Activated CD4-positive, alpha-beta T cell treated with anti-CD3 and anti-CD28 coated beads for 36 hours (primary cell): ENCODE measurements at regions of chr15 and their contacts with region 1.

Region 1: GRCh38 chr15:90648137-90649070 is 68.7 kb upstream of the BLM start:
- DNase-seq: peak; percentile 78
- ATAC-seq: peak; percentile 82
- H3K4me3 Mint-ChIP-seq: peak overlapping the region; percentile 39
- H3K27ac Mint-ChIP-seq: peak overlapping the region; percentile 93
- H3K4me1 Mint-ChIP-seq: peaks cover 28% of the 10 kb centered on the region
- H3K27me3 Mint-ChIP-seq: no peaks in the 10 kb centered on the region

Region 2: DNA sequence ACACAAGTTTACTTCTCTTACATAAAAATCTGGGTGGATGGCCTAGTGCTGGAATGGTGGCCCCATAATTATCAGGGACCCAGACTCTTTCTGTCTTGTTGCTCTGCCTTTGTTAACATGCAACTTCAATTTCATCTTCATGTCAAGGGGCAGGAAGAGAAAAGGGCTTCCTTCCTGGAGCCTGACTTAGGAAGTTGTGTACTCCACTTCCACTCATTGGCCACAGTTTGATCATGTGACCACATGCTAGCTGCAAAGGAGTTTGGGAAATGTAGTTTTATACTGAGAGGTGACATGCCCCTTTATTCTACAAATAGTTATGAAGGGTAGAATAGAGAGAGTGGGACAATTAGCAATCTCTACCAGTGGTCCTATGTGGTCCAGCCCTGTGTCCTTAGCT is 1191.3 kb before region 1 on chr15:
- CTCF ChIA-PET with region 1: no interaction called
- POLR2A ChIA-PET with region 1: no interaction called
- intact Hi-C with region 1: no loop called
- DNase-seq: no peak
- ATAC-seq: peak; percentile 51
- H3K4me3 Mint-ChIP-seq: no peak overlapping the region
- H3K27ac Mint-ChIP-seq: no peak overlapping the region
- H3K4me1 Mint-ChIP-seq: no peaks in the 10 kb centered on the region
- H3K27me3 Mint-ChIP-seq: peaks cover 9% of the 10 kb centered on the region

Region 3: GRCh38 chr15:90436952-90437351 is 211.5 kb before region 1 on chr15:
- CTCF ChIA-PET with region 1: no interaction called
- POLR2A ChIA-PET with region 1: no interaction called
- intact Hi-C with region 1: no loop called
- DNase-seq: no peak
- ATAC-seq: no peak
- H3K4me3 Mint-ChIP-seq: no peak overlapping the region
- H3K27ac Mint-ChIP-seq: no peak overlapping the region
- H3K4me1 Mint-ChIP-seq: peaks cover 8% of the 10 kb centered on the region
- H3K27me3 Mint-ChIP-seq: no peaks in the 10 kb centered on the region

Region 4: DNA sequence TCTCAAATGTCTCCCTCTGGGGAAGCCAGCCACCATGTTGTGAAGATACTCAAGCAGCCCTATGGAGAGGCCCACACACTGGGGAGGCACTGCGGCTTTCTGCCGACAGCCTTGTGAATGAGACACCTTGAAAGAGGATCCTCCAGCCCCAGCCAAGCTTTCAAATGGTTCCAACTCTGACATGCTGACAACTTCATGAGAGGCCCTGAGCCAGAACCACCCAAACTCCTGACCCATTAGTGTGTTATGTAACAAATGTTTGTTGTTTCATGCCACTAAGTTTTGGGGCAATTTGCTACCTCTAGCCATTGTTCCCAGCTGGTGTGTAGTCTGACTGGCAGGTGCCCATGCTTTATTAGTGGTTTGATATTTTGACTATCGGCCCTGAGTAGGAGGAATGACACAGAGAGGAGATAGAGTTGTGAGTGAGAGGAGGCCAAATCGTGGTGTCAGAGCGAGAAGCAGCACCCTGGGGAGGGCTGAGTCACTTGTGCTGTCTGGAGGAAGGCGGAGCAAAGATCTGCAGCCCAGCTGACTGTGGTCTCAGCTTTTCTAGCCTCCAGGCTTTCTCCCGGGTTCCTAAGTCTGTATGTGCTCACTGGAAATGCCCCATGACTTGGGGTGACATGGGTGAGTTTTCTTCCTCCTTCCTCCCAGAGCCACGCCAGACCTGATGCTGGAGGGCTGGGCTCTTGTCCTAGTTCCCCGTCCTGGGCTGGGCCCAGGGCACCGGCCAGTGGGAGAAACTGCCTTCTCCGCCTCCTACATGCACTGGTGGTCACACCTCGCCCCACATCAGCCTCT is 12.0 kb after region 1 on chr15:
- CTCF ChIA-PET with region 1: interaction called, 6 read pairs
- POLR2A ChIA-PET with region 1: no interaction called
- intact Hi-C with region 1: loop called in 1 of 2 experiments (anchors 1 kb)
- DNase-seq: peak; percentile 89
- ATAC-seq: peak; percentile 96
- H3K4me3 Mint-ChIP-seq: peak overlapping the region; percentile 52
- H3K27ac Mint-ChIP-seq: peak overlapping the region; percentile 43
- H3K4me1 Mint-ChIP-seq: peaks cover 73% of the 10 kb centered on the region
- H3K27me3 Mint-ChIP-seq: peaks cover 47% of the 10 kb centered on the region

Region 5: DNA sequence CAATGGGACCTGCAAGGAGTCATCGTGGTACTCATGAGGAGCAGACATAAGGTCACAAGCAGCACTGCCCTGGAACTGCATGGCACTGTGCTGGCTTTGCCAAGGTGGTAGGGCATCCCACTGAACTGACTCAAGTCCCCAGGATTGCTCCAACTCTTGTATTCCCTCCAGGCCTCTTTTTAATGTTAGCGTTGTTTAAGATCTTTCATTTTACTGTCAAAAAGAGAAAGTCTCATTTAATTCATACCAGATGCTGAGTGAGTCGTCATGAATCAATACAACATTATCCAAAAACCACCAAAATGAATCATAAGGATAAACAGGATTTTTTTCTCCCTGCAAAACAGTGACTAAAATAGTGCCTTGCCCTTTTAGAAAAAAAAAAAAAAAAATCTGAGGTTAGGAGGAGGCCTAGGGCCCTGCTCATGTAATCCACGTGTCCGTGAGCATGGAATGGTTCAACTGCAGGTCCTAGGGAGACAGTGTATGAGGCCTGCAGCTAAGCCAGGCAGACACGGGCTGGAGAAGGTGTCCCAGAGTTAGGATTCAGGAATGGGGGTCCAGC is 32.0 kb after region 1 on chr15:
- CTCF ChIA-PET with region 1: interaction called, 10 read pairs
- POLR2A ChIA-PET with region 1: no interaction called
- intact Hi-C with region 1: loop called (anchors 1 kb)
- DNase-seq: no peak
- ATAC-seq: peak; percentile 59
- H3K4me3 Mint-ChIP-seq: no peak overlapping the region
- H3K27ac Mint-ChIP-seq: no peak overlapping the region
- H3K4me1 Mint-ChIP-seq: peaks cover 46% of the 10 kb centered on the region
- H3K27me3 Mint-ChIP-seq: peaks cover 5% of the 10 kb centered on the region

Region 6: GRCh38 chr15:90691982-90692773 is 43.8 kb after region 1 on chr15:
- CTCF ChIA-PET with region 1: interaction called, 21 read pairs
- POLR2A ChIA-PET with region 1: no interaction called
- intact Hi-C with region 1: loop called (anchors 1 kb)
- DNase-seq: no peak
- ATAC-seq: no peak
- H3K4me3 Mint-ChIP-seq: no peak overlapping the region
- H3K27ac Mint-ChIP-seq: no peak overlapping the region
- H3K4me1 Mint-ChIP-seq: peaks cover 13% of the 10 kb centered on the region
- H3K27me3 Mint-ChIP-seq: no peaks in the 10 kb centered on the region

Region 7: GRCh38 chr15:90818251-90819210 is 170.1 kb after region 1 on chr15:
- CTCF ChIA-PET with region 1: no interaction called
- POLR2A ChIA-PET with region 1: no interaction called
- intact Hi-C with region 1: loop called in 1 of 2 experiments (anchors 5 kb)
- DNase-seq: peak; percentile 56
- ATAC-seq: peak; percentile 47
- H3K4me3 Mint-ChIP-seq: no peak overlapping the region
- H3K27ac Mint-ChIP-seq: peak overlapping the region; percentile 90
- H3K4me1 Mint-ChIP-seq: peaks cover 44% of the 10 kb centered on the region
- H3K27me3 Mint-ChIP-seq: no peaks in the 10 kb centered on the region

Region 8: GRCh38 chr15:90902040-90902839 is 253.8 kb after region 1 on chr15:
- CTCF ChIA-PET with region 1: interaction called, 5 read pairs
- POLR2A ChIA-PET with region 1: no interaction called
- intact Hi-C with region 1: loop called in 1 of 2 experiments (anchors 5 kb)
- DNase-seq: peak; percentile 83
- ATAC-seq: peak; percentile 79
- H3K4me3 Mint-ChIP-seq: peak overlapping the region; percentile 81
- H3K27ac Mint-ChIP-seq: peak overlapping the region; percentile 88
- H3K4me1 Mint-ChIP-seq: peaks cover 16% of the 10 kb centered on the region
- H3K27me3 Mint-ChIP-seq: no peaks in the 10 kb centered on the region